ENCODE measurements at regions of chr12 and their contacts with region 1.

Region 1: DNA sequence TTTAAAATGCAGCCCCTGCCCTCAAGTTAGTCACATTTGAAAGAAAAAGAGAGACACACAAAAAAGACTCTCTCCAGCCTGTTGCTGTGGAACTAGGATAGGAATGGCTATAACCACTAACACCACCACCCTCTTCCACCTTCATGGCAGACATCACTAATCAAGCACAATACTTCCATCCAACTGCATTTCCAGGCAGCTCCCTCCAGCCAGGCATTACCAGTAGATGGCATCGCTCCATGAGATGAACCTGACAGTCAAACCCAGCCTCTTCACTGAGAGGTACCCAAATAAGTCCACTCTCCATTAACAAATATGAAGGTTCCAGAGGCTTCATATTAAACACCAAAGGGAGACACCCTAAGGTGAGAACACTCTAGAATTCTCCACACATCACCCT is 24.4 kb downstream of the SLC8B1 start:
- DNase-seq: no peak
- ATAC-seq: no peak
- H3K4me3 ChIP-seq: no peak overlapping the region
- H3K27ac ChIP-seq: no peak overlapping the region
- H3K4me1 ChIP-seq: peaks cover 0 to 12% (median 0%) of the 10 kb centered on the region in 9 donors
- H3K27me3 ChIP-seq: no peaks in the 10 kb centered on the region
- CTCF ChIP-seq: no peak

Region 2: DNA sequence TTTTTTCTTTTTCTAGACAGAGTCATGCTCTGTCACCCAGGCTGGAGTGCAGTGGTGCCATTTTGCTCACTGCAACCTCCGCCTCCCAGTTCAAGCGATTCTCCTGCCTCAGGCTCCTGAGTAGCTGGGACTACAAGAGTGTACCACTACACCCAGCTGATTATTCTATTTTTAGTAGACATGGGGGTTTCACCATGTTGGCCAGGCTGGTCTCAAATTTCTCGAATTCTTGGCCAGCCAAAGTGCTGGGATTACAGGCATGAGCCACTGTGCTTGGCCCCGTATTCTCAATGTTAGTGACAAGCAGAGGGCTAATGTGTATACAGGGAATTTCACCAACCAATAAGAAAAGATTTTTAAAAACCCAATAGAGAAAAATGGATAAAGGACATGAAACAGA is 56.3 kb after region 1 on chr12:
- intact Hi-C with region 1: loop called in 1 of 10 experiments (anchors 5 kb)
- DNase-seq: peak in 1 of 2 donors; percentile 23
- ATAC-seq: peak; percentile 43 to 91 (median 84)
- H3K4me3 ChIP-seq: no peak overlapping the region
- H3K27ac ChIP-seq: peak overlapping the region in 6 of 10 donors; percentile 43 to 70 (median 61)
- H3K4me1 ChIP-seq: peaks cover 0 to 33% (median 10%) of the 10 kb centered on the region in 9 donors
- H3K27me3 ChIP-seq: no peaks in the 10 kb centered on the region
- CTCF ChIP-seq: no peak

Region 3: DNA sequence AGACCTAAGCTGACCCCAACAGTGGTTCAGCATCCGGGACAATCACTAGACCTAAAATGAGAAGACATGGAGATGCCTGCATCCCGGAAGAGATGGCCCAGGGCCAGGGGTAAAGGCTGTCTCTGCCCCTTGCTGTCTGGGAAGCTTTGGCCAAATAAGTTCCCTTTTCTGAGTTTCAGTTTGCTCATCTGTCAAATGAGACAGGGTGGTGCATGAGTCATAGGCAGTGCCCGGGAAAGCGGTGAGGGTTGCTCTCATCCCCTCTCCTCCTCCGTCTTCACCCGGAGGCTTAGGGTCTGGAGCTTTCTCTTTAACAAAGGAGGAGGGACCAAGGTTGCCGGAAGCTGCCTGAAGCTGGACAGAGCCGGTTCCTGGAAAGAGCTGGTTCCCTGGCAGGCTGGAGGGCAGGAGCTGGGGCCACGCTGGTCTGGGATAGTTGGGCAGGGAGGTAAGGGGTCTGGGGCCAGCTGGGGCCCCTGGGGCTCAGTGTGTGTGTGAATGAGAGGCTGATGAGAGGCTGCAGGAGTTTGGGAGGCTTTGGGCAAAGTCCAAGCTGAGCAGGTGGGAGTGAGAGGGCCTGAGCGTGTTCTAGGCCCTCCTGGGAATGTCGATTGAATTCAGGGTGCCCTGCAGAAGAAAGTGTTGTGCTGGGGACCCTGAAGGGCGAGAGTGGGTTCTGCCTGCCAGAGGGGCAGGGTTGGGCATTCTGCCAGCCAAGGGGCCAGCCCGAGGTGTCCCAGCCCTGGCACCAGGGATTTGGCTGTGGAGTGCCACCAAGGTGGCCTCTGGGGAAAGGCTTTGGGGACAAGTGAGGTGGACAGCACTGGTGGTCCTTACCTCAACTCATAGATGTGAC is 111.8 kb after region 1 on chr12 and contains the start of gene SDSL:
- intact Hi-C with region 1: loop called (anchors 1 to 10 kb)
- DNase-seq: peak; percentile 56 to 68
- ATAC-seq: peak; percentile 82 to 93 (median 90)
- H3K4me3 ChIP-seq: peak within 1 kb of the TSS in 9 of 10 donors; percentile 18 to 71 (median 60)
- H3K27ac ChIP-seq: peak within 1 kb of the TSS in 6 of 10 donors; percentile 73 to 93 (median 80)
- H3K4me1 ChIP-seq: peaks cover 0 to 44% (median 9%) of the 10 kb centered on the region in 9 donors
- H3K27me3 ChIP-seq: no peaks in the 10 kb centered on the region
- CTCF ChIP-seq: no peak
- total RNA-seq, gene SDSL: 4.0 to 23.4 (median 15.3) TPM

Region 4: DNA sequence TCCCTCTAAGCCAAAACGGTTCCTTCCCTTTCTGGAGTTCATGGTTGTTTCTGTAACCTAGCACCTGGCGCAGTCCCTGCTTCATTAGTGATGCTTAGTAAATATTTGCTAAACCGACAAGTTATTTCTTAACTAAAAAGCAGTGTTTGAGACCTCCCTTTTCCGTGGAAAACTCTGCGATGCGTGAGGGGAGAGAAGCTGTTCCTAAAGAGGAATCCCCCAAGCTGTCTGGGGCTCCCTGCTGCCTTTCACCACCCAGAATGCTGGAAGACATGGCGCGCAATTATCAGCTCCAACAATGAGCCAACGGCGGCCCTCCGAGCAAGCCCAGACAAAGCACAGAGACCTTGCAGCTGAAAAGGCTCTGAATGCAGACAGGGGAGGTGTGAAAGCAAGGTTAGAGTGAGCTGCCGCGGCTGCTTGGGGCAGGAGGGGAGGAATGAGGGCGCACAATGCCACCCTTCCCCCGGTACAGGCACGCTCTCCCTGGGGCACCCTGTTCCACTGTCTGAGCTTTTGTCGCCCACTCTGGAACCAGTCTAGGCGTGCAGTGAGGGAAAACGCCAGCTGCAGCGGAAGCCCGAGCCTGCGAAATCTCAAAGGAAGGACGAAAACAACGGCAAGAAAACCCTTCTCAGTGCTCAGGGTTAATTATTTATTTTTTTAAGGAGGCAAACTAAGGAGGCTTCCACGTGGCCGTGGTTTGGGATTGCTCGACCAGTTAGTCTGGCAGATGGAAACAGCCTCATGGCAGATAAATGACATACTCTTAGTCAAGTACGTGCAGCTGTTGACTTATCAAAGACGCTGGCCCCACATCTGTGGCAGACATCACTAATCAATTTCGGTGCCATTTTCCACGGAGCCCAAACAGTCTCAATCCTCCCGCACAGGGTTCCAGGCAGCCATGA is 589.3 kb after region 1 on chr12:
- intact Hi-C with region 1: loop called in 1 of 10 experiments (anchors 10 kb)
- DNase-seq: no peak
- ATAC-seq: no peak
- H3K4me3 ChIP-seq: no peak overlapping the region
- H3K27ac ChIP-seq: no peak overlapping the region
- H3K4me1 ChIP-seq: peaks cover 0 to 12% (median 4%) of the 10 kb centered on the region in 9 donors
- H3K27me3 ChIP-seq: no peaks in the 10 kb centered on the region
- CTCF ChIP-seq: no peak

Measured in heart right ventricle (tissue), 16 donors.